Heart left ventricle (tissue), 16 donors: ENCODE measurements at regions of chr12 and their contacts with region 1.

Region 1: DNA sequence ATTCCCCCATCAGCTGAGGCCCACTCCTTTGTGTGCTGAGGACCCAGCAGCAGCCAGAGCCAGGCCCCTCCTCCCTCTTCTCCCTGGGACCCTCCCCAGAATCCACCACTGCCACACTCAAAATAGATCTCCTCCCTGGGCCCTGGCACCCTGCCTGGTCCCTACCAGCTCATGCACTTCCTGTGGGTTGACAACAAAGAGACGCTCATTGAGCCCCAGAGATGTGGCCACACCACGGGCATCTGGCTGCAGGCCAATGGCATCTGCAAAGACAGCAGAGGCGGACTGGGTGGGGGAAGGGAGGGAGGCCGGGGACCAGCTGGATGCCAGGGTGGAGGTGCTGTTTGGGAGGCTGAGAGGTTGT is 16.0 kb upstream of the ENDOU start:
- DNase-seq: peak; percentile 78 to 92 (median 85)
- ATAC-seq: peak in 1 of 4 donors; percentile 4
- H3K4me3 ChIP-seq: no peak overlapping the region
- H3K27ac ChIP-seq: peak overlapping the region in 11 of 12 donors; percentile 44 to 86 (median 72)
- H3K4me1 ChIP-seq: peaks cover 23 to 79% (median 50%) of the 10 kb centered on the region in 12 donors
- H3K27me3 ChIP-seq: no peaks in the 10 kb centered on the region
- CTCF ChIP-seq: no peak
- POLR2A ChIP-seq: no peak

Region 2: GRCh38 chr12:47551426-47551851 is 189.9 kb before region 1 on chr12:
- intact Hi-C with region 1: no loop called
- DNase-seq: peak in 2 of 5 donors; percentile 23 to 40
- ATAC-seq: peak in 3 of 4 donors; percentile 81 to 97 (median 84)
- H3K4me3 ChIP-seq: no peak overlapping the region
- H3K27ac ChIP-seq: peak overlapping the region in 2 of 12 donors; percentile 29 to 56
- H3K4me1 ChIP-seq: no peaks in the 10 kb centered on the region
- H3K27me3 ChIP-seq: no peaks in the 10 kb centered on the region
- CTCF ChIP-seq: no peak
- POLR2A ChIP-seq: no peak

Region 3: DNA sequence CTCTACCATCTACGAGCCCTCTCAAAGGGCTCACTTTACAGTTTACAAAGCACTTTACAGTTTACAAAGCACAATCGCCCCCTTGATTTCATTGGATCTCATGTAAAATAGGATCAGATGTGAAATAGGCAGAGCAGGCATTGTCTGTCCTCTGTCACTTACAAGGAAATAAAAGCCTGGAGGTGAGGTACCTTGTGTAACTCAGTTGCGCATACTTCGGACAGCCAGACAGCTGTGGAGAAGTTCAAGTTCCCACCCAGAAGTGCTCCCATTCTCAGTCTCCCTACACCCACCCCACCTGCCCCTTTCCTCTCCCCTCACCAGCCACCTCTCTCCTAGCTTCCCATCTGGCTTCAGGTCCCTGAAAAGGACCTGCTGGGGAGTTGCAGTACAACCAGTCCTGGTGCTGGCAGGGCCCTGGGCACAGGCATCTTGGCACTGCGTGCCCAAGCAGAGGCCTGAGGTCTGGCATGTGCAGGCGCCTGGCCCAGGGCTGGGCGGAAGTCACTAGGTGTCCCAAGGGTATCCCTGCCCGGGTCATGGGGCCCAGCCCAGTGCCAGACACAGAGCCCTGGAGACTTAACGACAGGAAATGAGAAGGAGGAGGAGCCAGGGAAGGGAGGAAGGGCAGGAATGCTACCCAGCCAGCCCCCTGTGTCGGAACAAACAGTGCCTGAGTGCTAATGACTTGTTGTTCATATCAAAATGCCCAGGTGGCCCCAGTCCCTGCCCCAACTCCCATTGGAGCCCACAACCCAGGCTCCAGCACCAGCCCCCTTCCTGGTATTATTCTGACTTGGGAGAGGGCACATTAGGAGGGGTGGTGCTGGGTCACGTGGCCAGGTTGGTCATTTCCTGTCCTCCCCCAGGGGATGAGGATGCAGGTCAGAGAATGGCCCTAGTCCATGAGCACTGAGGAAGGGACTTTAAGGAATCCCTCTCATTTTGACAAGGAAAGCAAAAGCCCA is 12.0 kb after region 1 on chr12:
- intact Hi-C with region 1: loop called in 2 of 10 experiments (anchors 2 kb)
- DNase-seq: peak; percentile 84 to 95 (median 91)
- ATAC-seq: peak; percentile 90 to 96 (median 92)
- H3K4me3 ChIP-seq: peak overlapping the region in 6 of 12 donors; percentile 2 to 67 (median 26)
- H3K27ac ChIP-seq: peak overlapping the region; percentile 64 to 90 (median 82)
- H3K4me1 ChIP-seq: peaks cover 18 to 70% (median 55%) of the 10 kb centered on the region in 12 donors
- H3K27me3 ChIP-seq: no peaks in the 10 kb centered on the region
- CTCF ChIP-seq: no peak
- POLR2A ChIP-seq: peak in 1 of 2 donors; percentile 9

Region 4: GRCh38 chr12:47758834-47759690 is 17.7 kb after region 1 on chr12 and contains the start of gene RAPGEF3:
- intact Hi-C with region 1: loop called in 1 of 10 experiments (anchors 2 kb)
- DNase-seq: peak; percentile 89 to 93 (median 91)
- ATAC-seq: peak; percentile 76 to 90 (median 88)
- H3K4me3 ChIP-seq: peak within 1 kb of the TSS; percentile 42 to 76 (median 64)
- H3K27ac ChIP-seq: peak within 1 kb of the TSS; percentile 64 to 90 (median 82)
- H3K4me1 ChIP-seq: peaks cover 4 to 70% (median 47%) of the 10 kb centered on the region in 12 donors
- H3K27me3 ChIP-seq: no peaks in the 10 kb centered on the region
- CTCF ChIP-seq: peak; percentile 27 to 62 (median 50)
- POLR2A ChIP-seq: peak in 1 of 2 donors; percentile 7
- total RNA-seq, gene RAPGEF3: 14.5 to 47.8 (median 23.9) TPM

Region 5: DNA sequence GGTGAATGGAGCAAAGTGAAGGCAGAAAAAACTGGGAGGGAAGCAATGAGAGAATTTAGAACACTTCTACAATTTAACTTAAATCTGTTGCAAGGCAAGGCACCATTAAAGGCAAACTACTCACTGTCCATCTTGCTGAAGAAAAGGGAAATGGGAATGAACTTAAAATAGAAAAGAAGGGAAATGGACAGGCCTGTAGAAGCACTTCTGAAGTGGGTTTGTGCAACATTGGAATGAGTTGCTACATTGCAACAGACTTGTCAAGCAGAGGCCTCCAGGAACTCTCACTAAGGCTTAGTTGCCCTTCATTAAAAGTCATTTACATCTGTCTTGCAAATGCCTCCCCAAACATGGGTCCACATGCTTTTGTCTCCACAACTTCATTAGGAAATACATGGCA is 475.5 kb after region 1 on chr12:
- intact Hi-C with region 1: no loop called
- DNase-seq: no peak
- ATAC-seq: peak in 1 of 4 donors; percentile 48
- H3K4me3 ChIP-seq: no peak overlapping the region
- H3K27ac ChIP-seq: peak overlapping the region in 2 of 12 donors; percentile 43 to 55
- H3K4me1 ChIP-seq: peaks cover 0 to 11% (median 0%) of the 10 kb centered on the region in 12 donors
- H3K27me3 ChIP-seq: peaks cover 0 to 11% (median 0%) of the 10 kb centered on the region in 9 donors
- CTCF ChIP-seq: no peak
- POLR2A ChIP-seq: no peak